ENCODE measurements at regions of chr20 and their contacts with region 1.

Region 1: DNA sequence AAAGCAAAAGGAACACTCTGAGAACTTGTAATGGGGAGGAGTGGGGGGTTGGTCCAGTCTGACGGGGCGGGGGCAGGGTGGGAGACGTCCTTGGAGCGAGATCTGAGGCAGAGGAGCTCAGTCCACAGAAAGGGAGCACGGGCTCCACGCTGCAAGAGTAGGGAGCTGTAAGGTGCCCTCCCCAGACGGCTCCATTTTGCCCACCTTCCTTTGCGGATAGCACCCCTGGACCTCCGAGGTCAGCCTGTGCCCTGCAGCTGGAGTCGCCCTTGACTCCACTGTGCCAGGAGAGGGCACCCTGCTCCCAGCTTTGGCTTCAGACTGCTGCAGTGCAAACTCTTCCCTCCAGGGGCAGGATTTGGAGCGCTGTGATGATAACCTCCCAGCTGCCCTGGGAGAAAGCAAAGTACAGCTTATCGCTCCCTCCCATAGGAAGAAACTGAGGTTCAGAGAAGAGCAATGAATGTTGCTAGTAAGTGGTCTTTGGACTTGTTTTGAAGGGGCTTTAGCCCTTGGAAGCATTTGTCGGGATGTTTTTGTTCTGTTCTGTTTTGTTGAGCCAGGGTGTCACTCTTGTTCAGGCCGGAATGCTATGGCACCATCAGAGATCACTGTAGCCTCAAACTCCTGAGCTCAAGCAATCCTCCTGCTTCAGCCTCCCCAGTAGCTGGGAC is 9.5 kb upstream of the AHCY start:
- H3K4me3 ChIP-seq: peak overlapping the region; percentile 34
- H3K27ac ChIP-seq: no peak overlapping the region
- H3K4me1 ChIP-seq: no peaks in the 10 kb centered on the region
- CTCF ChIP-seq: peak; percentile 100

Region 2: GRCh38 chr20:34190679-34191090 is 122.0 kb before region 1 on chr20:
- CTCF ChIA-PET with region 1: interaction called, 20 read pairs
- POLR2A ChIA-PET with region 1: no interaction called
- H3K4me3 ChIP-seq: no peak overlapping the region
- H3K27ac ChIP-seq: no peak overlapping the region
- H3K4me1 ChIP-seq: peaks cover 3% of the 10 kb centered on the region; the same call in 1 of the 2 replicates
- CTCF ChIP-seq: peak; percentile 75; the same call in 1 of the 2 replicates

Region 3: GRCh38 chr20:34334654-34335407 is 22.1 kb after region 1 on chr20:
- CTCF ChIA-PET with region 1: interaction called, 23 read pairs
- POLR2A ChIA-PET with region 1: no interaction called
- H3K4me3 ChIP-seq: no peak overlapping the region
- H3K27ac ChIP-seq: no peak overlapping the region
- H3K4me1 ChIP-seq: peaks cover 5% of the 10 kb centered on the region; the same call in 1 of the 2 replicates
- CTCF ChIP-seq: no peak

Region 4: GRCh38 chr20:34427331-34427730 is 114.7 kb after region 1 on chr20:
- CTCF ChIA-PET with region 1: interaction called, 15 read pairs
- POLR2A ChIA-PET with region 1: no interaction called
- H3K4me3 ChIP-seq: no peak overlapping the region
- H3K27ac ChIP-seq: no peak overlapping the region
- H3K4me1 ChIP-seq: no peaks in the 10 kb centered on the region
- CTCF ChIP-seq: no peak

Region 5: DNA sequence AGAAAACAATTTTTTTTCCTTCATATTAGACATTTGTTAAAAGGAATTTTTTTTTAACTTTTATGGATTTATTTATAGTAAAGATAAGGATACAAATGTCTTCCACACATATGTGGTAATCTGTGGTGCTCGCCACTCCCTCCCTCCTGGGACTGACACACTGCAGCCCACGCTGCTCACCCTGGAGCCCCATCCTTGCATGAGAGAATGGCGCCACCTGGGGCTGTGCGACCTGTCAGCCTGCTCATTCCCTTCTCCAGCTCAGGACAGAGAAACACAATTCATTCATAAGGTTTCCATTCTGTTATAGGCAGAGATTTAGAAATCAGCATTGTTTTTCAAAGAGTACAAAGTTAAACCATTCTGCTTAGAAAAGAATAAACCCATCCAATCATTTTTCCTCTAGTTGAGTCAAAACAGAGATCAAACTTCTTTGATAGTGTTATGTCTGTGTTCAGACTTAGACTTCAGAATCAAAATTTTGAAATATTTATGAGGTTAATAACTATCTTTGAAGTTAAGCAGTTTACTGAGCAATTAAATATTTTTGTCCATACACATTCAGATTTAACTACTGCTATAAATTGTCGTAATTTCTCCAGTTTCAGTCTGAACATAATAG is 160.7 kb after region 1 on chr20:
- CTCF ChIA-PET with region 1: interaction called, 36 read pairs
- POLR2A ChIA-PET with region 1: no interaction called
- H3K4me3 ChIP-seq: no peak overlapping the region
- H3K27ac ChIP-seq: no peak overlapping the region
- H3K4me1 ChIP-seq: peaks cover 9% of the 10 kb centered on the region
- CTCF ChIP-seq: peak; percentile 73

Region 6: DNA sequence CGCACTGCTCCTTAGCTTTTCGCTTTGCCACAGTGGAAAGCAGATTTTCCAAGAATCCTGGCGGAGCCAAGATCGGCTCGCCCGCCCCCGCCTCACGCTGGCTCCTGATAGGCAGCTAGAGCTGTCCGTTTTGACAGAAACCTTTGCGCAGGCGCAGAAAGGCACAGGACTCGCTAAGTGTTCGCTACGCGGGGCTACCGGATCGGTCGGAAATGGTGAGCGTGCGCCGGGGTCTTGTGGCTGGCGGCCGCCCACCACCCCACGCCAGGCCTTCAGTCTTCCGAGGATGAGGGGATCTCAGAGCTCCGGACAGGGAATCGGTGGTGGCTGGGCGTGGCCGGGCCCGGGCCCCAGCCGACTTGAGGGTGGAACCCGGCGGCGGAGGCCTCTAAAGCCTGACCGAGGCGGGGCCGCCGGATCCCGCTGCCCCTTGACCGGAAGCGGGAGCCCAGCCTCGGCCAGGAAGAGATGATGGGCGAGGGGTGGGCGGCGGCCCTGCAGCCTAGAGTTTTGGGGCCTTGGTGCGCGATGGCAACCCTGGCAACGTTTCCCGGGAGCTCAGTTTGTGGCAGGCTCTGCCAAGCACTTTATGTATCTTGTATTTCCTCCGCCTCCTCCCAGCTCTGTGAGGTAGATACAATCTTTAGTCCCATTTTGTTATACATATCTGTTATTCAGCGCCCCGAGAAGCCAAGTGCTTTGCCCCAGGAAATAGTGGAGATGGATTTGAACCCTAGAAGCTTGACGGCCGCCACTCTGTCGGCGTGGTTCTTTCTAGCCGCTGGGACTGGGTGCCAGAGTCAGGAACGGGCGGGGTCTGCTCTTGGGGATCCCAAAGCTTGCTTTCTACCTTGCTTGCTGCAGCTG is 203.8 kb after region 1 on chr20 and contains the start of gene DYNLRB1:
- CTCF ChIA-PET with region 1: interaction called, 116 read pairs
- POLR2A ChIA-PET with region 1: interaction called, 17 read pairs
- H3K4me3 ChIP-seq: peak within 1 kb of the TSS; percentile 80
- H3K27ac ChIP-seq: peak within 1 kb of the TSS; percentile 87
- H3K4me1 ChIP-seq: no peaks in the 10 kb centered on the region
- CTCF ChIP-seq: no peak; the same call in 1 of the 2 replicates

Region 7: GRCh38 chr20:34768096-34768495 is 455.4 kb after region 1 on chr20:
- CTCF ChIA-PET with region 1: interaction called, 39 read pairs
- POLR2A ChIA-PET with region 1: no interaction called
- H3K4me3 ChIP-seq: no peak overlapping the region
- H3K27ac ChIP-seq: no peak overlapping the region
- H3K4me1 ChIP-seq: no peaks in the 10 kb centered on the region
- CTCF ChIP-seq: no peak